ENCODE measurements at regions of chr14 and their contacts with region 1.

Region 1: GRCh38 chr14:69879175-69880043 is at the start of gene SMOC1:
- DNase-seq: peak; percentile 93

Region 2: GRCh38 chr14:69997849-69998248 is 118.4 kb after region 1 on chr14:
- CTCF ChIA-PET with region 1: interaction called, 6 read pairs
- POLR2A ChIA-PET with region 1: interaction called, 43 read pairs
- DNase-seq: peak; percentile 19

Region 3: GRCh38 chr14:70013269-70013873 is 134.0 kb after region 1 on chr14:
- CTCF ChIA-PET with region 1: interaction called, 10 read pairs
- POLR2A ChIA-PET with region 1: interaction called, 97 read pairs
- DNase-seq: peak; percentile 72

Measured in HEK293T (cell line).